ENCODE measurements at regions of chr7 and their contacts with region 1.

Region 1: DNA sequence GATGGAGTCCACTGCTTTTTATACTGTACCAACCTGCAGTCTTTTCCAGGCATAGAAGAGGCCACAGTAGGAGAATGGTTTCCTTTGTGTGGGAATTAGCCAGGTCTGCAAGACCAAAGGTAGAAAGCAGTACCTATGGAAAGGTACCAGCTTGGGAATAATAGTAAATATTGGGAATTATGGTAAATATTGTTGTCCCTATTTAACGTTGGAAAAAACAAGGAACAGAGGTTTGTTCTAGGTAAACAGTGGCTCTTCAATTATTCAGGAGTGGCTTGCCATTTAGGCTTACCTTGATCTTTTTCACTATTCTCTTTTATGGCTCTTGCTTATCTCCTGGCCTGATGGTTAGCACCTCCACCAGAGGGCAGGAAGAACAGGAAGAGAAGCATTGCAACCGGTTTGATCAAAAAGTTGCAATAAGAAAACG is 43.9 kb upstream of the GSAP start:
- DNase-seq: peak; percentile 53 to 62
- H3K4me3 ChIP-seq: no peak overlapping the region
- H3K4me3 Mint-ChIP-seq: no peak overlapping the region
- H3K27ac Mint-ChIP-seq: no peak overlapping the region
- H3K4me1 ChIP-seq: peaks cover 34% of the 10 kb centered on the region
- H3K4me1 Mint-ChIP-seq: peaks cover 25% of the 10 kb centered on the region
- H3K27me3 ChIP-seq: no peaks in the 10 kb centered on the region
- H3K27me3 Mint-ChIP-seq: no peaks in the 10 kb centered on the region
- CTCF ChIP-seq: peak; percentile 36 to 56

Region 2: DNA sequence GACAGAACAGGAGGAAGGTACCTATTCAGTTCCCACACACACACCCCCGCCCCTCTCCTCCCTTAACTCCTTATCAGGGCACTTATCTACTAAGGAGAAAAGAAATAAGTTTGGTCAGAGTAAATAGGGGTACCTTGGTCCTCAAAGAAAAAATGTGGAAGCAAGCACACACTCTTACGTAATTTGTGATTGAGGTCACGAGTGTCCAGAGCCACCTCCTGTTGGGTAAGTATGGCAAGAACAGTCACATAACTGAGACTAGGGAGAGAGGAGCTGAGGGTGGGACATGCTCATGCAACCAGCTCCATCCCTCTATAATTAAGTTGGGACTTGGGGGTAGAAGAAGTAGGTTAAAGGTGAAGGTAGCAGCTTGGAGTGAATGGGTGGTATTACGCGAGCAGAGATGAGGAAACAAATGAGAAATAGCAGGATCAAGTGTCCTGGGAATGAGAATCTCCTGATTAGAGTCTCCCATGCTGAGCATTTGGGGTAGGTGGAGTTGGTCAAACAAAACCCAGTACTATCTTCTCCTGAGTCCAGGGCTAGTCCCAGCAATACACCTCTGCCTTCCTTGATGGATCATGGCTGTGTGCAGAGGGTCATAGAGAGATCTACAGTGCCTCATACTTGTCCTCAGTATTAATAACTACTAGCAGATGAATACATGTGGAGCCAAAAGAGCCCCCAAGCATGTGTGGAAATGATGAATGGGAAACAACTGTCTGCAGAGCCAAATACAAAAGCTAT is 121.0 kb before region 1 on chr7:
- CTCF ChIA-PET with region 1: no interaction called
- POLR2A ChIA-PET with region 1: no interaction called
- intact Hi-C with region 1: loop called (anchors 1 kb)
- DNase-seq: peak; percentile 69 to 78
- H3K4me3 ChIP-seq: no peak overlapping the region
- H3K4me3 Mint-ChIP-seq: peak overlapping the region; percentile 16
- H3K27ac Mint-ChIP-seq: peak overlapping the region; percentile 74
- H3K4me1 ChIP-seq: peaks cover 24% of the 10 kb centered on the region
- H3K4me1 Mint-ChIP-seq: peaks cover 21% of the 10 kb centered on the region
- H3K27me3 ChIP-seq: no peaks in the 10 kb centered on the region
- H3K27me3 Mint-ChIP-seq: no peaks in the 10 kb centered on the region
- CTCF ChIP-seq: no peak

Region 3: GRCh38 chr7:77415823-77416622 is 44.0 kb before region 1 on chr7 and contains the start of gene GSAP:
- CTCF ChIA-PET with region 1: no interaction called
- POLR2A ChIA-PET with region 1: interaction called, 3 read pairs
- intact Hi-C with region 1: loop called (anchors 2 kb)
- DNase-seq: peak; percentile 65 to 80
- H3K4me3 ChIP-seq: peak within 1 kb of the TSS; percentile 67
- H3K4me3 Mint-ChIP-seq: peak within 1 kb of the TSS; percentile 72
- H3K27ac Mint-ChIP-seq: peak within 1 kb of the TSS; percentile 85
- H3K4me1 ChIP-seq: peaks cover 23% of the 10 kb centered on the region; the same call in 1 of the 2 replicates
- H3K4me1 Mint-ChIP-seq: peaks cover 19% of the 10 kb centered on the region
- H3K27me3 ChIP-seq: no peaks in the 10 kb centered on the region
- H3K27me3 Mint-ChIP-seq: no peaks in the 10 kb centered on the region
- CTCF ChIP-seq: no peak
- total RNA-seq, gene GSAP: 25.7 and 27.1 TPM in 2 replicates

Region 4: DNA sequence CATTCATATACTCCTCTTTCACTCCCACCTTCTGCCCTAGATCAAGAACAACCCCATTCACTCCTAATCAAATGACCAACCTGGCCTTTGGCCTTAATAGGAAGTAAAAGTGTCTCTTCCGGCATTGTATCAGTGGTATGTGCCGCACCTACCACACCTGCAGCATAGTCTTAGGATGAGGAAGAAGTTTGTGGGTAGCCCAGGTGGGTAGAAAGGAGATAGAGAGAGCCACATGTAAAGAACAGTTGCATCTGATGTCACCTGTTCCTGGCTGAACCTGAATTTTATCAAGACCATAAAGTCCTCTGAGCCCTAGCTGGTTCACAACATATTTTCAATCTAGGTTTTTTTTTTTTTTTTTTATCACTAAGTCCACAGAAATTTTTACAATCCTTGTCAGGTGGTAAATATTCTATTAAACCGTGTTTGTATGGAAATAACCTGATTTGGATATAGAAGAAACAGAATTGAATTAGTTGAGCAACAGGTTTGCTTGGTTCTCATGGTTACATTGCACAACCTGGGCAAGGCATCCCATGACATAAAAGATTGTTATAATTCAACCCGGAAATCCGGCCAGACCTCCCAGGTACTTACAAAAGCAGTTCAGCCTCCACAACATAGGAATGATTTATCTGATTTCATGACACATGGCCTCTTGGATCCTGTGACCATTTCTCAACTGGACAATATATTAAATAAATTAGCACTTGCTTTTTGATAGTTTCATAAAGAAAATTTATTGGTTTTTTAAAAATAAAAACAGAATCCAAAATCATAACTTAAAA is 21.7 kb after region 1 on chr7:
- CTCF ChIA-PET with region 1: interaction called, 3 read pairs
- POLR2A ChIA-PET with region 1: interaction called, 4 read pairs
- intact Hi-C with region 1: loop called (anchors 1 kb)
- DNase-seq: peak; percentile 78
- H3K4me3 ChIP-seq: no peak overlapping the region
- H3K4me3 Mint-ChIP-seq: peak overlapping the region; percentile 20
- H3K27ac Mint-ChIP-seq: peak overlapping the region; percentile 94
- H3K4me1 ChIP-seq: peaks cover 37% of the 10 kb centered on the region
- H3K4me1 Mint-ChIP-seq: peaks cover 25% of the 10 kb centered on the region
- H3K27me3 ChIP-seq: no peaks in the 10 kb centered on the region
- H3K27me3 Mint-ChIP-seq: no peaks in the 10 kb centered on the region
- CTCF ChIP-seq: no peak

Region 5: DNA sequence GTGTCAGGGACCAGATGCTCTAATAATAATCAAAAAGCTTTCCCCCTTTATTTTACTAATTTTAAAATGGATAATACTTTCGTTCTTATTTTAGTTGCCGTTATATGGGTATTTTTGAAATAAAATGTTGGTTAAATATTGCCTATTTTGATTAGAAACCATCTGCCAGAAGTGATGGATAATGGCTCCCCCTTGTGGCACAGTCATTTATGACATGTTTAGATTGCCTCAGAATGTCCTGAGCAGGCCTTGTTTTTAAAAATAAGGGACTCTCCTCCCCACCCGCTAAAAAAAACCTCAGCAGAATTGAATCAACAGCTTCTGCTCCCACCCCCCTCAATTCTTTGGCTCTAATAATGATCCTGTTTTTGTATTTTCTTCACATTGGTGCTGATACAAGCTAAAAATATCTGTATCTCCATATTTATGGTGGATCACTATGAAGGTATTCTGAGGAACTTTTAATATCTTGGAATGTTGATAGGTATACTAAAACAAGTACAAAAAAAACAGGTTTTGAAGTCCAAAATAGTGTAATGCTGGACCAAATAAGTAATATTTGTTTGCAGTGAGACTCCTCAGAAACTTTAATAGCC is 299.3 kb after region 1 on chr7:
- CTCF ChIA-PET with region 1: no interaction called
- POLR2A ChIA-PET with region 1: no interaction called
- intact Hi-C with region 1: no loop called
- DNase-seq: peak; percentile 52 to 79
- H3K4me3 ChIP-seq: no peak overlapping the region
- H3K4me3 Mint-ChIP-seq: no peak overlapping the region
- H3K27ac Mint-ChIP-seq: no peak overlapping the region
- H3K4me1 ChIP-seq: peaks cover 5% of the 10 kb centered on the region; the same call in 1 of the 2 replicates
- H3K4me1 Mint-ChIP-seq: peaks cover 6% of the 10 kb centered on the region
- H3K27me3 ChIP-seq: no peaks in the 10 kb centered on the region
- H3K27me3 Mint-ChIP-seq: no peaks in the 10 kb centered on the region
- CTCF ChIP-seq: peak; percentile 71 to 79

Measured in Caco-2 (cell line).